Activated naive CD4-positive, alpha-beta T cell treated with anti-CD3 and anti-CD28 coated beads for 36 hours (primary cell): ENCODE measurements at regions of chr1 and their contacts with region 1.

Region 1: GRCh38 chr1:225977937-225978748 is 21.0 kb downstream of the SDE2 start:
- DNase-seq: no peak
- H3K4me3 Mint-ChIP-seq: no peak overlapping the region
- H3K27ac Mint-ChIP-seq: no peak overlapping the region
- H3K4me1 Mint-ChIP-seq: peaks cover 7% of the 10 kb centered on the region
- H3K27me3 Mint-ChIP-seq: no peaks in the 10 kb centered on the region

Region 2: DNA sequence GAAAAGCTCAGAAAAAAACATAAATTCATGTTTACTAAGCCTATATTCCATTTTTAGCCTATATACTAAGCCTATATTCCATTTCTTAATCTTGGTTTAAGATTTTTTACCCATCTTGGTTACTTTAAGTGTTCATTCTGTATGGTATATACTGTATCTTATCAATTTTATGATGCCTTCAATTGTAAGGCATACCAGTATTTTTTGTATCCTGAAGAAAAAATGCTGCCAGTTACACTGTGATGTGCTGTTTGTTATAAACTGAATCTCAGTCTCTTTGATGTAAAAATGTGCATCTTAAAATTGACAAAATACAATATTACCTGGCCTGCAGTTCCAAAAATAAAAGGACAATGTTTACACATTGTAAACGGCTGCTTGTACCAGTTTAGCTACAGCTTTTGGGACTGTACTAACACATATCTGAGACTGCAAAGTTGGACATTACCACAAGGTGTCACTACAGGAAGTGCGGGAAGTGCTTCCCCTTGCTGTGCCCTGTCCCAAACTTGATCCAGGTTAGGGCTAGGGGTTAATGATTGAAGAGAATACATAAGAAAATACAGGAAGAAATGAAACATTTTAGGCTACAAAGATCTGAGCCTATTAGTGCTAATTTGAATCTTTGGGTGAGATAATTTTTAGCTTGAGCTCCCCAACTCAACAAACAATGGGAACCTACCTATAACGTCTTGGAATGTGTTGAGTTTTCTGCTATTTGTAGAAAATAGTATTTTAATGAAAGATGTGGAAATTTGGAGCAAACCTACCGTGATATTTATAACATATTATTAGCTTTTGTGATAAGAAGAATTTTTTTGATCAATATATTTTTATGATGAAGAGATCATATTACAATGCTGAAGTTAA is 659.2 kb before region 1 on chr1:
- CTCF ChIA-PET with region 1: no interaction called
- intact Hi-C with region 1: loop called (anchors 1 kb)
- DNase-seq: peak; percentile 55
- H3K4me3 Mint-ChIP-seq: no peak overlapping the region
- H3K27ac Mint-ChIP-seq: no peak overlapping the region
- H3K4me1 Mint-ChIP-seq: peaks cover 2% of the 10 kb centered on the region
- H3K27me3 Mint-ChIP-seq: no peaks in the 10 kb centered on the region

Region 3: GRCh38 chr1:225554216-225554812 is 423.8 kb before region 1 on chr1:
- CTCF ChIA-PET with region 1: interaction called, 3 read pairs
- intact Hi-C with region 1: loop called (anchors 1 kb)
- DNase-seq: no peak
- H3K4me3 Mint-ChIP-seq: no peak overlapping the region
- H3K27ac Mint-ChIP-seq: no peak overlapping the region
- H3K4me1 Mint-ChIP-seq: no peaks in the 10 kb centered on the region
- H3K27me3 Mint-ChIP-seq: peaks cover 2% of the 10 kb centered on the region

Region 4: DNA sequence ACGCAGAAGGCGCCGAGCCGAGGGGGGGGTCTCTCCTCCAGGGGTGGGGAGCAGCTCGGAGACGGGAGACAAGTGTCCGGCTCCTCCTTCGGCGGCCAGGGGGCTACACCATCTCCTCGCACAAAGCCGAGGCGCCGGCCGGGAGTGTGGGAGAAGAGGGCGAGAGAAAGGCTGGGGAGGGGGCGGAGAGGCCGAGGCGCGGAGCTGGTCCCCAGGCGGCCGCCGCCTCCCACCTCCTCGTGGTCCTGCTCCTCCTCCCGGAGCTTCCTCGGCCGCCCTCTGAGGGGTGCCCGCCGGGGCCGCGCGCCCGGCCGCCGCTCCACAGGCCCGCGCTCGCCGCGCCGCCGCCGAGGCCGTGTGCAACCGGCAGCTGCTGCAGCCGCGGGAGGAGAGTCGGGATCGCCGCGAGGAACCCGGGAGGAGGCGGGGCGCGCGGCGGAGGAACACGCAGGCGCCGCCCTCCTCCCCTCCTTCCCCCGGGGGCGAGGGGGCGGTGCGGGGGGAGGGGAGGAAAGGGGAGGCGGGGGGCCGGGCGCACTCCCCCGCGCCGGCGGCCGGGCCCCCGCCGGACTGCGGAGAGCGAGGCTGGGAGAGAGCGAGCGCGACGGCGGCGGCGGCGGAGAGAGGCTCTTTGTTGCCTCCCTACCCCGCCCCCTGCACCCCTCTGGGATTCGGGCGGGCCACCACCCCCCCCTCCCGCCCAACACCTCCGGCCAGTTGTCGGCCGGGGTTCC is 325.2 kb before region 1 on chr1 and contains the start of gene ENAH:
- CTCF ChIA-PET with region 1: interaction called, 3 read pairs
- intact Hi-C with region 1: loop called (anchors 2 kb)
- DNase-seq: peak; percentile 52
- H3K4me3 Mint-ChIP-seq: peak within 1 kb of the TSS; percentile 85
- H3K27ac Mint-ChIP-seq: peak within 1 kb of the TSS; percentile 50
- H3K4me1 Mint-ChIP-seq: peaks cover 10% of the 10 kb centered on the region
- H3K27me3 Mint-ChIP-seq: peaks cover 24% of the 10 kb centered on the region
- total RNA-seq, gene ENAH: 0.91 to 2.0 TPM

Region 5: GRCh38 chr1:225806249-225806648 is 171.9 kb before region 1 on chr1:
- CTCF ChIA-PET with region 1: no interaction called
- intact Hi-C with region 1: no loop called
- DNase-seq: no peak
- H3K4me3 Mint-ChIP-seq: no peak overlapping the region
- H3K27ac Mint-ChIP-seq: no peak overlapping the region
- H3K4me1 Mint-ChIP-seq: peaks cover 14% of the 10 kb centered on the region
- H3K27me3 Mint-ChIP-seq: no peaks in the 10 kb centered on the region

Region 6: GRCh38 chr1:225923692-225924555 is 54.2 kb before region 1 on chr1 and contains the start of gene PYCR2:
- CTCF ChIA-PET with region 1: no interaction called
- intact Hi-C with region 1: loop called (anchors 1 kb)
- DNase-seq: peak; percentile 96
- H3K4me3 Mint-ChIP-seq: peak within 1 kb of the TSS; percentile 95
- H3K27ac Mint-ChIP-seq: peak within 1 kb of the TSS; percentile 90
- H3K4me1 Mint-ChIP-seq: peaks cover 59% of the 10 kb centered on the region
- H3K27me3 Mint-ChIP-seq: no peaks in the 10 kb centered on the region
- total RNA-seq, gene PYCR2: 143 to 149 TPM

Region 7: GRCh38 chr1:225962440-225962975 is 15.6 kb before region 1 on chr1:
- CTCF ChIA-PET with region 1: interaction called, 19 read pairs
- intact Hi-C with region 1: no loop called
- DNase-seq: peak; percentile 76
- H3K4me3 Mint-ChIP-seq: no peak overlapping the region
- H3K27ac Mint-ChIP-seq: no peak overlapping the region
- H3K4me1 Mint-ChIP-seq: no peaks in the 10 kb centered on the region
- H3K27me3 Mint-ChIP-seq: no peaks in the 10 kb centered on the region